Common myeloid progenitor, CD34-positive (primary cell): ENCODE measurements at regions of chr11 and their contacts with region 1.

Region 1: DNA sequence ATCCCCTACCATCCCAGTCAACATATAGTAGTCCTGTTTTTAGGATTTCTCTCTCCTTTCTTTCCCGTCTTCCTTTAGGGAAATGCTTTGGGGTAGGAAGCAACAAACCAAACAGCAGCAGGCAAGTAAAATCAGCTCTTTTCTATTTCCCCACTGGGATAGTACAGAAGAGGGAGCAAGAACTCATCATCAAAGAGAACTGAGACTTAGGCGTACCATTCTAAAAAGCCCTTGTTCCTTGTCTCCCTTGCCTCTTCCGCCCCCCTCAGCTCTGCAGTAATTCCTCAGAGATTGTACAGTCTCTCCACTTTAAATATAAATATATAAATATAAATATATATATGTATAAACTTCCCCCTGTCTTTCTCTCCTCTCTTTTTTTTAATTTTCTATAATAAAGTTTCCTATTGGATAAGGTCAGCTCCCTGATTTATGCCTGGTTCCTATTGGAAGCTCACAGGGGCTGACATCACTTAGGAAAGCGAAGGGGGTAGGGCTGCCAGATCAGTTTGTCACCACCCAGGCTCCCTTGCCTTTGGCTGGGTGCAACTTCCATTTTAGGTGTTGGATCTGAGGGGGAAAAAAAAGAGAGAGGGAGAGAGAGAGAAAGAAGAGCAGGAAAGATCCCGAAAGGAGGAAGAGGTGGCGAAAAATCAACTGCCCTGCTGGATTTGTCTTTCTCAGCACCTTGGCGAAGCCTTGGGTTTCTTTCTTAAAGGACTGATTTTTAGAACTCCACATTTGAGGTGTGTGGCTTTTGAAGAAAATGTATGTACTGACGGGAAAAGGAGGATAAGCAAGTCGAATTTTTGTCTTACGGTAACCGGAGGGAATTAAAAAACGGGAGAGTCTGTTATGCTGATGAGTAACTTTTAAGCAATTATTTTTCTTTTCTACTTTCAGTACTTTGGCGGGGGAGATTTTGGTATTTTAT is at the start of gene CTNND1:
- DNase-seq: peak; percentile 94 to 97 (median 96)
- H3K4me3 ChIP-seq: peak within 1 kb of the TSS; percentile 31 to 99 (median 87)
- H3K27ac ChIP-seq: peak within 1 kb of the TSS; percentile 93 to 98
- H3K4me1 ChIP-seq: peaks cover 12 to 33% (median 25%) of the 10 kb centered on the region in 4 experiments
- H3K27me3 ChIP-seq: no peaks in the 10 kb centered on the region

Region 2: GRCh38 chr11:57680552-57680874 is 81.1 kb before region 1 on chr11:
- CTCF ChIA-PET with region 1: no interaction called
- POLR2A ChIA-PET with region 1: no interaction called
- DNase-seq: no peak
- H3K4me3 ChIP-seq: no peak overlapping the region
- H3K27ac ChIP-seq: peak overlapping the region in 1 of 2 experiments; percentile 27
- H3K4me1 ChIP-seq: no peaks in the 10 kb centered on the region
- H3K27me3 ChIP-seq: no peaks in the 10 kb centered on the region

Region 3: GRCh38 chr11:57741132-57742086 is 20.2 kb before region 1 on chr11 and contains the start of gene SELENOH:
- CTCF ChIA-PET with region 1: interaction called, 50 read pairs
- POLR2A ChIA-PET with region 1: interaction called, 9 read pairs
- DNase-seq: peak; percentile 97 to 99 (median 99)
- H3K4me3 ChIP-seq: peak within 1 kb of the TSS; percentile 72 to 98 (median 91)
- H3K27ac ChIP-seq: peak within 1 kb of the TSS; percentile 89 to 96
- H3K4me1 ChIP-seq: peaks cover 13 to 26% (median 20%) of the 10 kb centered on the region in 4 experiments
- H3K27me3 ChIP-seq: no peaks in the 10 kb centered on the region

Region 4: DNA sequence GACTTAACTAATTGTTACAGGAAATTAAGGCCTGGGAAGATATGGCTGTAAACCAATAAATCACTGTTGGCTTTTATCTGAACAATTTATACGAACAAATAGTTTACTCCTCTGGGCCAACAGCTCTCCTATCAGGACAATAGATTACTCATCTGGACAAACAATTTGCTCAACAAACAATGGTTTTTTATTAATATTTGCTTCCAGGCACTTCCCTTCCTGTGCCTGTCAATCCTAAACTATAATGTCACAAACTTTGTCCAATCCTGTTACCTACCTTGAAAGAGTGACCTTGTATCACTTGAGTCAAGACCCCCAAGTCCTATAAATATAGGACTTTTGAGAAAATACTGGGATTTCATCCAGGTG is 174.5 kb after region 1 on chr11:
- CTCF ChIA-PET with region 1: no interaction called
- POLR2A ChIA-PET with region 1: no interaction called
- DNase-seq: peak in 1 of 3 donors; percentile 8
- H3K4me3 ChIP-seq: no peak overlapping the region
- H3K27ac ChIP-seq: no peak overlapping the region
- H3K4me1 ChIP-seq: no peaks in the 10 kb centered on the region
- H3K27me3 ChIP-seq: peaks cover 0 to 2% (median 0%) of the 10 kb centered on the region in 5 experiments